Naive thymus-derived CD4-positive, alpha-beta T cell (primary cell): ENCODE measurements at regions of chr19 and their contacts with region 1.

Region 1: GRCh38 chr19:2475702-2476450 is at the start of gene GADD45B:
- DNase-seq: peak; percentile 91 to 98 (median 97)
- ATAC-seq: peak; percentile 87
- H3K4me3 ChIP-seq: peak within 1 kb of the TSS; percentile 91
- H3K4me3 Mint-ChIP-seq: peak within 1 kb of the TSS; percentile 97 to 100 (median 99)
- H3K27ac ChIP-seq: peak within 1 kb of the TSS; percentile 90
- H3K27ac Mint-ChIP-seq: peak within 1 kb of the TSS; percentile 92 to 99 (median 96)
- H3K4me1 ChIP-seq: peaks cover 0 to 14% of the 10 kb centered on the region in 2 donors
- H3K4me1 Mint-ChIP-seq: peaks cover 7 to 20% (median 16%) of the 10 kb centered on the region in 7 donors
- H3K27me3 ChIP-seq: no peaks in the 10 kb centered on the region
- H3K27me3 Mint-ChIP-seq: peaks cover 0 to 10% (median 0%) of the 10 kb centered on the region in 5 donors
- total RNA-seq, gene GADD45B: 71.7 to 157 (median 84.2) TPM

Region 2: DNA sequence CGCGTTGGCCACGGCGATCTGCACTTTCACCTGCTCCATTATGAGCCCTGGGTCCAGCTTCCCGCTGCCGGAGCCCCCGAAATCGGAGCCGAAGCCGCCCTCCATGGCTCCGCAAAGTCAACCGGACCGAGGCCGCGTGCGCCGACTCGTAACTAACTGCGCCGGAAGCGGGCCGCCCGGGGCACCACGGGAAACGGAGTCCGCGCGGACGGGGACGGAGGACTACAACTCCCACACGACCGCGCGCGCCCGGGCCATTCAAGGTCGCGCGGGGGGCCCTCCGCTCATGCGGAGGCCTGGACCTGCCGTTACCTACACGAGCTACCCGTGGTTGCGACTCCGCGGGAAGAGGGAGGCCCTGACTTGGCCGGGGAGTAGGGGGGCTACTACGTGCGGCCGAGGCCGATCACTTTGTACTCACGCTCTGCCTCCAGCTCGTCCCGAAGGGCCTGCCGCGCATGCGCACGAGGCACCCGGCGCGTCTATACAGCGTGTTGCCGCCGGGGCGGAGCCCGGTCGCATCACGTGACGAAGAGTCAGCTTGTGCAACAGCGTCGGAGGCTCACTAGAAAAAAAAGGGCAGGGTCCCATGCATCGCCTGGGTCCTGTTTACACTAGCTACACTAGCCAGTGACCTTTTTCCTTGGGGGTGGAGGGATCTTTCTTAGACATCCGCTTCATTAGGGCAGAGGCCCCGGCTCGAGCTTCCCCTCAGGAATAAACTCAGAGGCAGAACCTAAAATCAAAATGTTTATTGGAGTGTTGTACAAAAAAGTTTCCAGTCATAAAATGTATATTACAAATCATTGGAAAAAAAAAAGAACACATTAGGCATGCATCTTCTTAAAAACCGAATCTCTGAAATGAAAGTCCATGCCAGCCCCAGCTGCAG is 48.2 kb before region 1 on chr19 and contains the start of gene TIMM13:
- CTCF ChIA-PET with region 1: no interaction called
- POLR2A ChIA-PET with region 1: interaction called, 15 read pairs
- intact Hi-C with region 1: loop called (anchors 1 kb)
- DNase-seq: peak; percentile 96 to 99 (median 98)
- ATAC-seq: peak; percentile 96
- H3K4me3 ChIP-seq: peak within 1 kb of the TSS; percentile 97
- H3K4me3 Mint-ChIP-seq: peak within 1 kb of the TSS; percentile 89 to 98 (median 95)
- H3K27ac ChIP-seq: peak within 1 kb of the TSS; percentile 91
- H3K27ac Mint-ChIP-seq: peak within 1 kb of the TSS; percentile 93 to 99 (median 97)
- H3K4me1 ChIP-seq: peaks cover 11 to 16% of the 10 kb centered on the region in 2 donors
- H3K4me1 Mint-ChIP-seq: peaks cover 0 to 16% (median 14%) of the 10 kb centered on the region in 7 donors
- H3K27me3 ChIP-seq: no peaks in the 10 kb centered on the region
- H3K27me3 Mint-ChIP-seq: peaks cover 0 to 2% (median 0%) of the 10 kb centered on the region in 5 donors
- total RNA-seq, gene TIMM13: 31.3 to 70.8 (median 35.4) TPM

Region 3: DNA sequence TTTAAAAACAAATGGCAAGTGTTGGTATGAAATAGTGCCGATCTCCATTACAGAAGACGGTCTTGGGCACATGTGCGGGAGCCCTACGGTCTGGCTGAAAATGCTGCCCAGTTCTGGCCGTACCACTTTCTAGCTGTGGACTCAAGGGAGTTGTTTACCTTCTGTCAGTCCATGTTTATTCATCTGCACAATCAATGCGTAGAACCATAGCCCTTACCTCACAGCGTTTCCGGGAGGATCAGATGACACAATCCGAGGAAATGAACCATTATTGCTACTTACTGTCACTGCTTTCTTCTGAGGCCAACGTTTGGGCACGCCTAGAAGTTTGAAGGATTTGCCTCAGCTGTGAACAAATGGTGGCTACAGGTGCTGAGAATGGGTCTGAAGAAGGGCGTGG is 31.2 kb after region 1 on chr19:
- CTCF ChIA-PET with region 1: interaction called, 5 read pairs
- POLR2A ChIA-PET with region 1: interaction called, 145 read pairs
- intact Hi-C with region 1: loop called in 1 of 2 experiments (anchors 1 kb)
- DNase-seq: peak in 7 of 9 donors; percentile 41 to 70 (median 62)
- ATAC-seq: peak; percentile 72
- H3K4me3 ChIP-seq: no peak overlapping the region
- H3K4me3 Mint-ChIP-seq: peak overlapping the region; percentile 25 to 77 (median 68)
- H3K27ac ChIP-seq: no peak overlapping the region
- H3K27ac Mint-ChIP-seq: peak overlapping the region in 7 of 9 donors; percentile 74 to 92 (median 86)
- H3K4me1 ChIP-seq: peaks cover 11 to 15% of the 10 kb centered on the region in 2 donors
- H3K4me1 Mint-ChIP-seq: peaks cover 6 to 30% (median 21%) of the 10 kb centered on the region in 7 donors
- H3K27me3 ChIP-seq: no peaks in the 10 kb centered on the region
- H3K27me3 Mint-ChIP-seq: peaks cover 0 to 7% (median 0%) of the 10 kb centered on the region in 5 donors

Region 4: GRCh38 chr19:2561895-2562294 is 86.0 kb after region 1 on chr19:
- CTCF ChIA-PET with region 1: interaction called, 5 read pairs
- POLR2A ChIA-PET with region 1: interaction called, 74 read pairs
- intact Hi-C with region 1: loop called in 1 of 2 experiments (anchors 1 kb)
- DNase-seq: peak; percentile 38 to 78 (median 71)
- ATAC-seq: peak; percentile 93
- H3K4me3 ChIP-seq: peak overlapping the region; percentile 70
- H3K4me3 Mint-ChIP-seq: peak overlapping the region; percentile 83 to 96 (median 92)
- H3K27ac ChIP-seq: peak overlapping the region; percentile 78
- H3K27ac Mint-ChIP-seq: peak overlapping the region; percentile 92 to 99 (median 98)
- H3K4me1 ChIP-seq: peaks cover 8 to 11% of the 10 kb centered on the region in 2 donors
- H3K4me1 Mint-ChIP-seq: peaks cover 12 to 56% (median 20%) of the 10 kb centered on the region in 7 donors
- H3K27me3 ChIP-seq: no peaks in the 10 kb centered on the region
- H3K27me3 Mint-ChIP-seq: no peaks in the 10 kb centered on the region

Region 5: DNA sequence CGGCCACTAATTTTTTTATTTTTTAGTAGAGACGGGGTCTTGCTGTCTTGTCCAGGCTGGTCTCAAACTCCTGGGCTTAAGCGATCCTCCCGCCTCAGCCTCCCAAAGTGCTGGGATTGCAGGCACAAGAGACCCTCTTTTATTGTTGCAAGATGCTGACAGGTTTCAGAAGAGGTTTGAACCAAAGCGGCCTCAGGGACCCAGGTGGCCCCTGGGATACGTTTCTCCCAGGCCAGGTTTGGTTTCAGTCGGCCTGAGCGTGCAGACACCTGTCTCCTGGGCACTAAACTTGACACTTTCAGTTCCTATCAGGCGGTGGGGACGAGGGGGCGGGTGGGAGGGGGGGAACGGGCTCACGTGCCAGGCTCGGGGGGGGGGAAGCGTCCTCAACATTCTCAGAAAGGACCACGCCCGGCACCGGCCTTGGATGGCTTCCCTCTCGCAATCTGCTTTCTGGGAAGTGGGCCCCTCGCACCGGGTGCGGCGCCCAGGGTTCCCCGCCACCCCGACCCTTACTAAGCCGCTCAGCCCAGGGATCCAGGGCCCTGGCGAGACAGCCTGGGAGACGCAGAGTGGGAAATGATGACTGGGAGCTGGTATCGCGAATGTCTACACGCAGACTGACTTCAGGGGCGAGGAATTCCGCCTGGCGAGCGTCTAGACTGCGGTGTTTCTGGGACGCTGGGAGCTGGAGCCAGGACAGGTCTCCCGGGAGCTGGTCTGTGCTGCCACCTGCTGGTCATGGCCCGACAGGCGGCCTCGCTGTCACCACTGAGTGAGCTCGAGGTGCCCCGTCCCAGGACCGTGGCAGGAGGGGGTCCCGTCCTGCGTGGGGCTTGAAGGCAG is 135.0 kb after region 1 on chr19:
- CTCF ChIA-PET with region 1: interaction called, 78 read pairs
- POLR2A ChIA-PET with region 1: interaction called, 415 read pairs
- intact Hi-C with region 1: loop called (anchors 1 kb)
- DNase-seq: peak; percentile 69 to 93 (median 81)
- ATAC-seq: peak; percentile 86
- H3K4me3 ChIP-seq: peak overlapping the region; percentile 61
- H3K4me3 Mint-ChIP-seq: peak overlapping the region; percentile 70 to 91 (median 85)
- H3K27ac ChIP-seq: peak overlapping the region; percentile 55
- H3K27ac Mint-ChIP-seq: peak overlapping the region in 6 of 9 donors; percentile 41 to 86 (median 60)
- H3K4me1 ChIP-seq: peaks cover 17 to 23% of the 10 kb centered on the region in 2 donors
- H3K4me1 Mint-ChIP-seq: peaks cover 16 to 44% (median 34%) of the 10 kb centered on the region in 7 donors
- H3K27me3 ChIP-seq: no peaks in the 10 kb centered on the region
- H3K27me3 Mint-ChIP-seq: peaks cover 0 to 26% (median 0%) of the 10 kb centered on the region in 5 donors

Region 6: GRCh38 chr19:2782936-2783780 is 307.3 kb after region 1 on chr19 and contains the start of gene SGTA:
- CTCF ChIA-PET with region 1: interaction called, 3 read pairs
- POLR2A ChIA-PET with region 1: interaction called, 4 read pairs
- intact Hi-C with region 1: loop called in 1 of 2 experiments (anchors 2 kb)
- DNase-seq: peak; percentile 82 to 97 (median 95)
- ATAC-seq: peak; percentile 73
- H3K4me3 ChIP-seq: peak within 1 kb of the TSS; percentile 90
- H3K4me3 Mint-ChIP-seq: peak within 1 kb of the TSS; percentile 83 to 98 (median 88)
- H3K27ac ChIP-seq: peak within 1 kb of the TSS; percentile 95
- H3K27ac Mint-ChIP-seq: peak within 1 kb of the TSS; percentile 78 to 97 (median 92)
- H3K4me1 ChIP-seq: peaks cover 33 to 35% of the 10 kb centered on the region in 2 donors
- H3K4me1 Mint-ChIP-seq: peaks cover 29 to 64% (median 51%) of the 10 kb centered on the region in 7 donors
- H3K27me3 ChIP-seq: no peaks in the 10 kb centered on the region
- H3K27me3 Mint-ChIP-seq: no peaks in the 10 kb centered on the region
- total RNA-seq, gene SGTA: 32.2 to 47.8 (median 37.9) TPM